ENCODE measurements at regions of chr17 and their contacts with region 1.

Region 1: GRCh38 chr17:60077672-60078519 is 825 bp downstream of the HEATR6 start:
- DNase-seq: no peak
- ATAC-seq: peak; percentile 3 to 52 (median 20)
- H3K4me3 ChIP-seq: peak overlapping the region; percentile 50 to 86 (median 76)
- H3K27ac ChIP-seq: peak overlapping the region in 11 of 12 donors; percentile 75 to 93 (median 82)
- H3K4me1 ChIP-seq: peaks cover 2 to 27% (median 15%) of the 10 kb centered on the region in 12 donors
- H3K27me3 ChIP-seq: no peaks in the 10 kb centered on the region
- CTCF ChIP-seq: no peak
- POLR2A ChIP-seq: no peak

Region 2: GRCh38 chr17:59745040-59745439 is 332.9 kb before region 1 on chr17:
- intact Hi-C with region 1: no loop called
- DNase-seq: no peak
- ATAC-seq: no peak
- H3K4me3 ChIP-seq: no peak overlapping the region
- H3K27ac ChIP-seq: no peak overlapping the region
- H3K4me1 ChIP-seq: peaks cover 0 to 8% (median 0%) of the 10 kb centered on the region in 12 donors
- H3K27me3 ChIP-seq: no peaks in the 10 kb centered on the region
- CTCF ChIP-seq: no peak
- POLR2A ChIP-seq: no peak

Region 3: DNA sequence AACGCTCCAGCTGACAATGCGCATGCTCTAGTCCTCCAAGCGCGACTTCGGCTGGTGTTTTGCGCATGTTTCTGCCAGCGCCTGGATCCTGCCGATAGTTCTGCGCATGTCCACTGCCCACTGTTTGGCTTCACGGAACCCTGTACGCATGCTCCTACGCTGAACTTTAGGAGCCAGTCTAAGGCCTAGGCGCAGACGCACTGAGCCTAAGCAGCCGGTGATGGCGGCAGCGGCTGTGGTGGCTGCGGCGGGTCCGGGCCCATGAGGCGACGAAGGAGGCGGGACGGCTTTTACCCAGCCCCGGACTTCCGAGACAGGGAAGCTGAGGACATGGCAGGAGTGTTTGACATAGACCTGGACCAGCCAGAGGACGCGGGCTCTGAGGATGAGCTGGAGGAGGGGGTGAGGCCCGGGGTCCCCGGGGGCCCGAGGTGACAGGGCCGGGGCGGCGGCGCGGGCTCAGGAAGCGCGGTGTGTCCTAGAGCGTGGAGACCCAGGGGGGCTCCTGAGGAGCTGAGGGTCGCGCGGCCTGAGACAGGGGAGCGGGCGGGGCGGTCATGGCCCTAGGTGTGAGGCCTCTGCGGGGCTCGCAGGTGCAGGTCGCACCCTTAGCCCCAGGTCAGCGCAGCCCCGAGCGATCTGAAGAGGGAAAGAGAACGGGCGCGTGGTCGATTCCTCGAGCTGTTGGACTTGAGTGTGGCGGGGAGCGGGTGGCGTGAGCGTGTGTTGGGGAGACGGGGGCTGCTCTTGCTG is 184.8 kb before region 1 on chr17 and contains the starts of genes RPS6KB1 and TUBD1:
- intact Hi-C with region 1: no loop called
- DNase-seq: peak; percentile 97 to 98 (median 97)
- ATAC-seq: peak; percentile 99 to 100 (median 99)
- H3K4me3 ChIP-seq: peak within 1 kb of the TSS; percentile 67 to 100 (median 91)
- H3K27ac ChIP-seq: peak within 1 kb of the TSS; percentile 77 to 95 (median 88)
- H3K4me1 ChIP-seq: peaks cover 0 to 36% (median 20%) of the 10 kb centered on the region in 12 donors
- H3K27me3 ChIP-seq: no peaks in the 10 kb centered on the region
- CTCF ChIP-seq: no peak
- POLR2A ChIP-seq: peak in 1 of 2 donors; percentile 84
- total RNA-seq, gene RPS6KB1: 13.5 to 29.4 (median 24.5) TPM
- total RNA-seq, gene TUBD1: 3.7 to 8.5 (median 6.2) TPM

Region 4: GRCh38 chr17:59950049-59950448 is 127.8 kb before region 1 on chr17:
- intact Hi-C with region 1: loop called in 1 of 10 experiments (anchors 10 kb)
- DNase-seq: no peak
- ATAC-seq: no peak
- H3K4me3 ChIP-seq: no peak overlapping the region
- H3K27ac ChIP-seq: no peak overlapping the region
- H3K4me1 ChIP-seq: peaks cover 0 to 5% (median 0%) of the 10 kb centered on the region in 12 donors
- H3K27me3 ChIP-seq: no peaks in the 10 kb centered on the region
- CTCF ChIP-seq: no peak
- POLR2A ChIP-seq: no peak

Region 5: GRCh38 chr17:60142872-60143499 is 65.1 kb after region 1 on chr17:
- intact Hi-C with region 1: no loop called
- DNase-seq: peak; percentile 80 to 87 (median 86)
- ATAC-seq: peak; percentile 58 to 87 (median 76)
- H3K4me3 ChIP-seq: peak overlapping the region in 5 of 12 donors; percentile 3 to 35 (median 15)
- H3K27ac ChIP-seq: peak overlapping the region in 8 of 12 donors; percentile 22 to 63 (median 49)
- H3K4me1 ChIP-seq: peaks cover 4 to 49% (median 34%) of the 10 kb centered on the region in 12 donors
- H3K27me3 ChIP-seq: peaks cover 23 to 72% (median 62%) of the 10 kb centered on the region in 9 donors
- CTCF ChIP-seq: peak; percentile 59 to 83 (median 72)
- POLR2A ChIP-seq: no peak

Measured in heart left ventricle (tissue), 16 donors.